ENCODE measurements at regions of chr14 and their contacts with region 1.

Region 1: GRCh38 chr14:23186913-23187654 is 3.6 kb upstream of the SLC7A8 start:
- DNase-seq: peak; percentile 68
- H3K4me3 Mint-ChIP-seq: no peak overlapping the region
- H3K27ac Mint-ChIP-seq: no peak overlapping the region
- H3K4me1 Mint-ChIP-seq: peaks cover 5% of the 10 kb centered on the region
- H3K27me3 Mint-ChIP-seq: no peaks in the 10 kb centered on the region
- CTCF ChIP-seq: peak; percentile 78

Region 2: GRCh38 chr14:22980672-22981089 is 206.4 kb before region 1 on chr14:
- CTCF ChIA-PET with region 1: no interaction called
- POLR2A ChIA-PET with region 1: no interaction called
- intact Hi-C with region 1: no loop called
- DNase-seq: peak; percentile 61
- H3K4me3 Mint-ChIP-seq: no peak overlapping the region
- H3K27ac Mint-ChIP-seq: peak overlapping the region; percentile 16
- H3K4me1 Mint-ChIP-seq: peaks cover 44% of the 10 kb centered on the region
- H3K27me3 Mint-ChIP-seq: no peaks in the 10 kb centered on the region
- CTCF ChIP-seq: no peak

Region 3: GRCh38 chr14:23076785-23077408 is 110.2 kb before region 1 on chr14:
- CTCF ChIA-PET with region 1: interaction called, 14 read pairs
- POLR2A ChIA-PET with region 1: interaction called, 3 read pairs
- intact Hi-C with region 1: loop called (anchors 5 kb)
- DNase-seq: peak; percentile 48
- H3K4me3 Mint-ChIP-seq: no peak overlapping the region
- H3K27ac Mint-ChIP-seq: no peak overlapping the region
- H3K4me1 Mint-ChIP-seq: peaks cover 30% of the 10 kb centered on the region
- H3K27me3 Mint-ChIP-seq: no peaks in the 10 kb centered on the region
- CTCF ChIP-seq: peak; percentile 55

Region 4: DNA sequence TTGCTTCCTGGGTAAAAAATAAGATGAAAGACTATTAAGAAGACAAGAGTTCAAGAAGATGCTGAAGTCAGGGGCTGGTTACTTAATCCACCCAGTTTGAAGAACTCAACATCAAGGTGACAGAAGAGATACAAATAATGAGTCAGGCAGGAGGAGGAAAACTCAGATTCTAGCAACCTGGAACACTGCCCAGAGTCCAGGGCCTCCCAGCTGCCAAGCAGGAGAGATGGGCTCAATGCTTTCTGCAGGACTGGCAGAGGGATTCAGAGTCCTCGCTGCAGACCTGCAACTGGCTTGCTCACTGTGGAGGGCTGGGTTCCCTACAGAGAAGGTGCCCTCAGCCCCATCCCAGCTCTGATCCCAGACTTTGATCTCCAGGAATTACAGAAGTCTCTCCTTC is 39.4 kb before region 1 on chr14:
- CTCF ChIA-PET with region 1: interaction called, 20 read pairs
- POLR2A ChIA-PET with region 1: interaction called, 8 read pairs
- intact Hi-C with region 1: no loop called
- DNase-seq: peak; percentile 83
- H3K4me3 Mint-ChIP-seq: no peak overlapping the region
- H3K27ac Mint-ChIP-seq: no peak overlapping the region
- H3K4me1 Mint-ChIP-seq: peaks cover 39% of the 10 kb centered on the region
- H3K27me3 Mint-ChIP-seq: no peaks in the 10 kb centered on the region
- CTCF ChIP-seq: no peak

Region 5: GRCh38 chr14:23160924-23161538 is 26.1 kb before region 1 on chr14:
- CTCF ChIA-PET with region 1: interaction called, 30 read pairs
- POLR2A ChIA-PET with region 1: interaction called, 7 read pairs
- intact Hi-C with region 1: no loop called
- DNase-seq: peak; percentile 82
- H3K4me3 Mint-ChIP-seq: peak overlapping the region; percentile 37
- H3K27ac Mint-ChIP-seq: no peak overlapping the region
- H3K4me1 Mint-ChIP-seq: peaks cover 19% of the 10 kb centered on the region
- H3K27me3 Mint-ChIP-seq: no peaks in the 10 kb centered on the region
- CTCF ChIP-seq: no peak

Region 6: DNA sequence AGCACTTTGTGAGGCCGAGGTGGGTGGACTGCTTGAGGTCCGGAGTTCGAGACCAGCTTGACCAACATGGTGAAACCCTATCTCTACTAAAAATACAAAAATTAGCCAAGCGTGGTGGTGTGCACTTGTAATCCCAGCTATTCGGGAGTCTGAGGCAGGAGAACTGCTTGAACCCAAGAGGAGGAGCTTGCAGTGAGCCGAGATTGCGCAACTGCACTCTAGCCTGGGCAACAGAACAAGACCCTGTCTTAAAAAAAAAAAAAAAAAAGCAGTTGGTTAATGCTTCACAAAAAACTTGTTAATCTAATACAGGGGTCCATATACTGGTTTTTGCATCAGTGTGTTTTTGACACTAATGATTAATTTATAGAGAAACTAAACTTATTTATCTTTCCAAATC is 14.9 kb after region 1 on chr14:
- CTCF ChIA-PET with region 1: interaction called, 22 read pairs
- POLR2A ChIA-PET with region 1: interaction called, 4 read pairs
- intact Hi-C with region 1: no loop called
- DNase-seq: no peak
- H3K4me3 Mint-ChIP-seq: no peak overlapping the region
- H3K27ac Mint-ChIP-seq: no peak overlapping the region
- H3K4me1 Mint-ChIP-seq: peaks cover 10% of the 10 kb centered on the region
- H3K27me3 Mint-ChIP-seq: no peaks in the 10 kb centered on the region
- CTCF ChIP-seq: no peak

Region 7: GRCh38 chr14:23286020-23286905 is 99.2 kb after region 1 on chr14 and contains the start of gene HOMEZ:
- CTCF ChIA-PET with region 1: interaction called, 8 read pairs
- POLR2A ChIA-PET with region 1: no interaction called
- intact Hi-C with region 1: loop called (anchors 5 kb)
- DNase-seq: peak; percentile 98
- H3K4me3 Mint-ChIP-seq: peak within 1 kb of the TSS; percentile 97
- H3K27ac Mint-ChIP-seq: peak within 1 kb of the TSS; percentile 75
- H3K4me1 Mint-ChIP-seq: peaks cover 8% of the 10 kb centered on the region
- H3K27me3 Mint-ChIP-seq: no peaks in the 10 kb centered on the region
- CTCF ChIP-seq: no peak
- total RNA-seq, gene HOMEZ: 6.6 and 9.3 TPM in 2 replicates

Region 8: GRCh38 chr14:23719225-23719946 is 532.3 kb after region 1 on chr14:
- CTCF ChIA-PET with region 1: no interaction called
- POLR2A ChIA-PET with region 1: no interaction called
- intact Hi-C with region 1: no loop called
- DNase-seq: no peak
- H3K4me3 Mint-ChIP-seq: no peak overlapping the region
- H3K27ac Mint-ChIP-seq: no peak overlapping the region
- H3K4me1 Mint-ChIP-seq: peaks cover 6% of the 10 kb centered on the region
- H3K27me3 Mint-ChIP-seq: no peaks in the 10 kb centered on the region
- CTCF ChIP-seq: no peak